ENCODE measurements at regions of chr5 and their contacts with region 1.

Region 1: DNA sequence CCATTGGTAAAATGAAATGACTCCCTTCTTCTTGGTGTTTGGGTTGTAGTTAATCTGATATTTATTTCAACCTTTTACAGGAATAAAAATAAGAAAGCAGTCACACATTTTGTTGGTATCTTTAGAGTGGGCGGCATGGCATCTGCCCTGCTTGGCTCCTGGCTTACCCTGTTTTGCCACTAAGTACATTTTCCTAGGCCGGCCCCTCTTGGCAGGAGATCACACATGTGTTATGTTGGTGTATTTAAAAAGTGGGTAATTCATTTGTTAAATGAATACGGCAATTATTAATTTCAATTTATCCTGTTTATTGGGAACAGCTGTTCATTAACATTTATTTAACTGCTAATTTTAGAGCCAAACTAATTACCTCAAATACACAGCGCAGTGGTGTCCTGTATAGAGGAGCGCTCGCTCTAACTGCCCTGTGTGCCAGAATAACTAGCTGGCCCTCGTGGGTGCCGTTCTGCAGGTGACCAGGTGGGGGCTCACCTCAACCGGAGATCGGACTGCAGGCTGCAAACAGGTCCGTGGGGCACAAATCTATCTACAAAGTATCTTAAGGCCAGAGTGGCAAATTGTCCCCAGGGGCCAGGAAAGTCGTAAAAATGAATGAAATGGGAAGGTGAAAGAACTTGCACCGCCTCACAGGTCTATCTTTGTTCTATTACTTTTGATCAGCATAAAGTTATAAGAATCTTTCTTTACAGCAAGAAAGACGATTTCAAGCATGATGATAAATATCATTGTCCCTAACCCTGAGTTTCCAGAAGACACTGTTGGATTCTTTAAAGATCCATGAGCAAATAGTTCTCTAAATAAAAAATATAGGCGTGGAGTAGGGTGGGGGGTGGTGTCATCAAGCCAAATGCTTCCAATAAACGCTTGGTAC is 26.2 kb upstream of the GPR151 start:
- DNase-seq: peak; percentile 78
- ATAC-seq: peak; percentile 95
- H3K4me3 ChIP-seq: no peak overlapping the region
- H3K27ac ChIP-seq: no peak overlapping the region
- H3K4me1 ChIP-seq: no peaks in the 10 kb centered on the region
- H3K27me3 ChIP-seq: no peaks in the 10 kb centered on the region
- CTCF ChIP-seq: peak; percentile 79

Region 2: GRCh38 chr5:146188358-146188757 is 353.8 kb before region 1 on chr5:
- intact Hi-C with region 1: no loop called
- DNase-seq: no peak
- ATAC-seq: no peak
- H3K4me3 ChIP-seq: no peak overlapping the region
- H3K27ac ChIP-seq: no peak overlapping the region
- H3K4me1 ChIP-seq: no peaks in the 10 kb centered on the region
- H3K27me3 ChIP-seq: peaks cover 6% of the 10 kb centered on the region
- CTCF ChIP-seq: no peak

Region 3: DNA sequence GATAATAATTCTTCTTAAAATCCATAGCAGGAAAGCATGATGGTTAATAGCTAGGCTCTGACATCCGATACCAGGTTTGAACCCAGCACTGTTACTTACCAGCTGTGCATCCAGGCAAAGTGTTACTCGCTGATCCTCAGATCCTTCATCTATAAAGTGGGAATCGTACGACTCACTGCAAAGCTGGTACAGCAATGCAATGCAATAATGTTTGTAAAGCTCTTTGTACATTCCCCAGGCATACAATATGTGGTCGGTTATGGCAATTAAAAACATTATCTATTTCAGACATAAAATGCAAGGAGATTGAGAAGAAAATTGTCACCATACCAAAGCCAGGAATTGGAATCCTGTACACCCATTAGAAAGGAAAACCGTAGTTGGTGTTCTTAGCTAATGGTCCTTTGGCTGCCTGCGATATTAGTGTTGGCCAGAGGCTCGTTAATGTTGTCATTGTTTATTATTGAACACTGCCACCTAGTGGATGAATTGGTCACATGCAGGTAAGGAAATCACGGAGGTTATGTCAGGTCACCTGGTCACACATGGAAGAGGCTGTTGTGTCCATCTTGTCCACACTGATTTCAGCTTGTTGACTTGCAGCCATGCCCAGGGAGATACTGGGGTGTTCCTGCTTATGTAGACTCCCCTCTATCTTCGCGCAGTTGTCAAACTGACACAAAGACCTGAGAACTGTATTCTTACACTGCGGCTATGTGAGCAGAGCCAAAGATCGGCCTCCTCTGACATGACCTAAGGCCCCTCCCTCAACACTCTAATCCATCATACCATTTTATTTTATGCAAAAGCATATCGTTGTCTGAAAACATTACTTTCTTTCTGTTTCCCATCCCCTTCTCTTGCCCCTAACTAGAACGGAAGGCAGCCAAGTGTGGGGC is 423.8 kb after region 1 on chr5:
- intact Hi-C with region 1: loop called (anchors 5 kb)
- DNase-seq: no peak
- ATAC-seq: peak; percentile 97
- H3K4me3 ChIP-seq: no peak overlapping the region
- H3K27ac ChIP-seq: no peak overlapping the region
- H3K4me1 ChIP-seq: no peaks in the 10 kb centered on the region
- H3K27me3 ChIP-seq: no peaks in the 10 kb centered on the region
- CTCF ChIP-seq: peak; percentile 91

Measured in upper lobe of right lung (tissue), 1 donor.